MCF 10A (cell line): ENCODE measurements at regions of chr7 and their contacts with region 1.

Region 1: DNA sequence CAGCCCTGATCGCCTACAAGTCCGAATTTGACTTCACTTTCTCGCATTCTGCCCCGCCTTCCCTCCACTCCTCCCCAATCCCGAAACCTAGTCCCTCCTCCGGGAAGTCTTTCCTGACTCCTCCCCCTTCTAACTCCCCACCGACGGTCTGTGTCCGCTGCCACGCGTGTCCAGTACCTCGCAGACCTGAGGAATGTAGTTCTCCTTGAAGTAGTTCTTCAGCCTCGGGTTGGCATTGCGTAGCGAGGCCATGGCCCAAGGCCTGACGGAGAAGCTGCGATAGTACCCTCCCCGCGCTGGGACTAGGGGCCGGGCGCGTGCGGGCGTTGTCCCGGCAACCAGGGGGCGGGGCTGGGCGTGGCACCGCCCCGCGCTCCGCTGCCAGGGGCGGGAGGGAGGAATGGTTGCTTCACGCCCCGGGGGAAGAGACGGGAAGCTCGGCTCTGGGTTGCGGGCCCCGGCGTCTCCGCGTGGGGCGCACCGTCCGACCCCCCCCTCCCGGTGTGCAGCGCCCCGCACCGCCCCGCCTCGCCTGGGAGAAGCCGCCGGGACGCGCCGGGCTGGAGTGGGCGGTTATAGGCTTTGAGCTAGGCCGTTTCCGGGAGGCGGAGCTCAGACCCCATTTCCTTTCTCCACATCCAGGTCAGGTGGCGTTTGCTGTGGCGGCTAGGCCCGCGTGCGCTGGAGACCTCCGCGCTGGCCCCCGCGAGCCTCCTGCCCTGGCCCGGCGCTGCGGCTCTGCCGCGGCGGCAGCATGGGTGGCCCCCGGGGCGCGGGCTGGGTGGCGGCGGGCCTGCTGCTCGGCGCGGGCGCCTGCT is at the starts of genes ARMC10 and FBXL13:
- DNase-seq: peak; percentile 91
- H3K4me3 Mint-ChIP-seq: peak within 1 kb of the TSS; percentile 83
- H3K27ac Mint-ChIP-seq: peak within 1 kb of the TSS; percentile 91
- H3K4me1 Mint-ChIP-seq: peaks cover 11% of the 10 kb centered on the region
- H3K27me3 Mint-ChIP-seq: no peaks in the 10 kb centered on the region
- CTCF ChIP-seq: peak; percentile 30
- total RNA-seq, gene ARMC10: 43.4 and 52.0 TPM in 2 replicates
- total RNA-seq, gene FBXL13: 0.35 and 0.74 TPM in 2 replicates

Region 2: GRCh38 chr7:103003004-103003403 is 71.7 kb before region 1 on chr7:
- CTCF ChIA-PET with region 1: no interaction called
- POLR2A ChIA-PET with region 1: no interaction called
- intact Hi-C with region 1: no loop called
- DNase-seq: no peak
- H3K4me3 Mint-ChIP-seq: no peak overlapping the region
- H3K27ac Mint-ChIP-seq: no peak overlapping the region
- H3K4me1 Mint-ChIP-seq: peaks cover 5% of the 10 kb centered on the region
- H3K27me3 Mint-ChIP-seq: no peaks in the 10 kb centered on the region
- CTCF ChIP-seq: no peak

Region 3: DNA sequence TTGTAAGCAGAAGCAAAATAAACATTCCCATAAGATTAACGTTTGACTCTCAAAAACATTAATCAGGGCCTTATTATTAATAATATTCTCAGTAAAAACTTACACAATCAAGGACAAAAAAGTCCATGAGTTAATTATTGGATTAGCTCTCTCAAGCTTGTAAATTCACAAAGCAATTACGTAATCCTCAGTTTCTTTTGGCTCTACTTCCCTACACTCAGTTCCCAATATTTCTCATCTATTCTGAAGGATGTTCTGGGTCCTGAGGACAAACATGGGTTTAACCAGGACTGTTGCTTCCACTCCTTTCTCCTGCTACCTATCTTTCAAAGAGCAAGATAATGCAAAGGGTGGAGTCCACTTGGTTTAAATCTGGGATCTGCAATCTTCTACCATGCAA is 15.3 kb before region 1 on chr7:
- CTCF ChIA-PET with region 1: interaction called, 65 read pairs
- POLR2A ChIA-PET with region 1: interaction called, 10 read pairs
- intact Hi-C with region 1: no loop called
- DNase-seq: no peak
- H3K4me3 Mint-ChIP-seq: no peak overlapping the region
- H3K27ac Mint-ChIP-seq: no peak overlapping the region
- H3K4me1 Mint-ChIP-seq: no peaks in the 10 kb centered on the region
- H3K27me3 Mint-ChIP-seq: no peaks in the 10 kb centered on the region
- CTCF ChIP-seq: no peak

Region 4: GRCh38 chr7:103094102-103094501 is 19.4 kb after region 1 on chr7:
- CTCF ChIA-PET with region 1: interaction called, 6 read pairs
- POLR2A ChIA-PET with region 1: interaction called, 45 read pairs
- intact Hi-C with region 1: no loop called
- DNase-seq: no peak
- H3K4me3 Mint-ChIP-seq: no peak overlapping the region
- H3K27ac Mint-ChIP-seq: no peak overlapping the region
- H3K4me1 Mint-ChIP-seq: peaks cover 5% of the 10 kb centered on the region
- H3K27me3 Mint-ChIP-seq: no peaks in the 10 kb centered on the region
- CTCF ChIP-seq: no peak

Region 5: DNA sequence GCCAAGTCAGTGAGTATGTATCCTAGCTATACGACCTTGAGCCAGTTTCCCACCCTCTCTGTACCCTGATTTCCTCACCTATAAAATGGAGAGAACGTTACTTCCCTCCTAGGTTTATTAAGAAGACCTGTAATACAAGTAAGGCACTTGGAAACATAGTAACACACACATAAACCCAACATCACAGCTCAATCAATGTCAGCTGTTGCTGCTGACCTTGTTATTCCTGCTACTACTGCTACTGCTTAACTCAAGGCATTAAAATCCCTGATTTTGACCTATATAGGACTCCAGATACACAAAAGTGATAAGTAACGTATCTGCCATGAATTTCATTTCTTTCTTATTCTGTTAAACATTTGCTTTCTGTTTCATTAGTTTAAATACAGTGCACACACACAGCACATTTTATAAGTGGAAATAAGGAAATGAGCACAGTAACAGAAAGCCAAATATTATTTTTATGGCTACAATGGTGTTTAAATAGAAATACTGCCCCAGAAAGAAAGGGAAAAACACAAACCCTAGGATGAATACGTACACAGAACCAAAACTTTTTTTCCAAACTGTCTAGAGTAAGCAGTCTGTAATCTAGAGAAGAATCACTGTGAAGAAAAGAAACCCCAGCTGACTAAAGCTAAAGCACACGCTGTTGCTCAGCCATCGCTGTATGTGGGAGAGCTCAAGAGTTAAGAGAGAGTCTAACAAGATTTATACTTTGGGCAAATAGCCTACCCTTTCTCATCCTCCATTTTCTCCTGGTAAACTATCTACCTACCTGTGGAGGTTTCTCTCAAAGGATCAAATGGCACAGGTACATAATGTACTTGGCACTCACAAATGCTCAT is 55.2 kb after region 1 on chr7:
- CTCF ChIA-PET with region 1: interaction called, 4 read pairs
- POLR2A ChIA-PET with region 1: interaction called, 11 read pairs
- intact Hi-C with region 1: no loop called
- DNase-seq: no peak
- H3K4me3 Mint-ChIP-seq: no peak overlapping the region
- H3K27ac Mint-ChIP-seq: no peak overlapping the region
- H3K4me1 Mint-ChIP-seq: peaks cover 8% of the 10 kb centered on the region
- H3K27me3 Mint-ChIP-seq: no peaks in the 10 kb centered on the region
- CTCF ChIP-seq: no peak

Region 6: GRCh38 chr7:103148994-103149807 is 74.5 kb after region 1 on chr7 and contains the start of gene NAPEPLD:
- CTCF ChIA-PET with region 1: interaction called, 3 read pairs
- POLR2A ChIA-PET with region 1: interaction called, 40 read pairs
- intact Hi-C with region 1: loop called (anchors 2 kb)
- DNase-seq: peak; percentile 82
- H3K4me3 Mint-ChIP-seq: peak within 1 kb of the TSS; percentile 92
- H3K27ac Mint-ChIP-seq: peak within 1 kb of the TSS; percentile 93
- H3K4me1 Mint-ChIP-seq: peaks cover 7% of the 10 kb centered on the region
- H3K27me3 Mint-ChIP-seq: no peaks in the 10 kb centered on the region
- CTCF ChIP-seq: no peak
- total RNA-seq, gene NAPEPLD: 5.8 and 6.1 TPM in 2 replicates